ENCODE measurements at regions of chr20 and their contacts with region 1.

Region 1: DNA sequence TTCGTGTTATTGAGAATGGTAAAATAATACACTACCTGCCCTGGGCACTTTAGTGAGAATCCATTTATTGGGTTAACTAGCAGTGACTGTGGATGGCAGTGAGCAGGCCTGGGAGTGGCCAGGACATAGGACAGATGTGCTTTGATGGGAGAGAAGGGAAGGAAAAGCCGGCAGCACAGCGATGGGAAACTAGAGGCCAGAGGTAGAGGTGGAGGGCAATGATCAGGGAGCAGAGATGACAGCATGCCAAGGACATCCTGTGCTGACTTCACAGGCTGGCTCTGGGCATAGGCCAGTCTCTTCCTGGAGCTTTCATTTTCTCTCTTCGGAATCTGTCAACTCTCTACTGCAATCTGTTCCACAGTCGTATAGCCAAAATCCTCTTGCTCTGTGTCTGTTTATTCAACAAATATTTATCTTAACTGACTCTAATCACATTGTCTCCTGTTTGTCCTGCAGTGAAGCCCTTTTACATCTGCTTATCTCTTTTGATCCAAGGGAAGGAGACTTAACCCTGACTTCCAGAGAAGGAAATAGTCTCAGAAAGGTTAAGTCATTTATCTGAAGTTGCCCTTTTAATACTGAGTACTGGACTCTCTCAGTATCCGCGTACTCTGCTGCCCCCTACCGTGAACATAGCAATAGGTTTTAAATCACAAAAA is 18.4 kb upstream of the MMP24 start:
- DNase-seq: peak; percentile 89
- H3K4me3 ChIP-seq: peak overlapping the region in 2 of 4 donors; percentile 3 to 32
- H3K27ac ChIP-seq: peak overlapping the region; percentile 72 to 85 (median 76)
- H3K4me1 ChIP-seq: peaks cover 0 to 12% (median 7%) of the 10 kb centered on the region in 4 donors
- H3K27me3 ChIP-seq: no peaks in the 10 kb centered on the region
- CTCF ChIP-seq: peak; percentile 80 to 87 (median 82)
- EP300 ChIP-seq: no peak
- POLR2A ChIP-seq: no peak

Region 2: GRCh38 chr20:35269055-35269781 is 61.1 kb after region 1 on chr20:
- intact Hi-C with region 1: loop called (anchors 5 kb)
- DNase-seq: no peak
- H3K4me3 ChIP-seq: no peak overlapping the region
- H3K27ac ChIP-seq: peak overlapping the region in 1 of 4 donors; percentile 12
- H3K4me1 ChIP-seq: peaks cover 0 to 24% (median 15%) of the 10 kb centered on the region in 4 donors
- H3K27me3 ChIP-seq: no peaks in the 10 kb centered on the region
- CTCF ChIP-seq: peak; percentile 49 to 77 (median 63)
- EP300 ChIP-seq: no peak
- POLR2A ChIP-seq: no peak

Measured in sigmoid colon (tissue), 7 donors.